Caco-2 (cell line): ENCODE measurements at regions of chr5 and their contacts with region 1.

Region 1: GRCh38 chr5:134436523-134437339 is 25.1 kb upstream of the CDKN2AIPNL start:
- DNase-seq: peak; percentile 84 to 86
- H3K4me3 ChIP-seq: peak overlapping the region; percentile 19
- H3K4me3 Mint-ChIP-seq: peak overlapping the region; percentile 55
- H3K27ac Mint-ChIP-seq: peak overlapping the region; percentile 82
- H3K4me1 ChIP-seq: peaks cover 47% of the 10 kb centered on the region
- H3K4me1 Mint-ChIP-seq: peaks cover 54% of the 10 kb centered on the region
- H3K27me3 ChIP-seq: no peaks in the 10 kb centered on the region
- H3K27me3 Mint-ChIP-seq: no peaks in the 10 kb centered on the region
- CTCF ChIP-seq: no peak

Region 2: GRCh38 chr5:134411546-134412266 is 25.0 kb before region 1 on chr5 and contains the start of gene CDKN2AIPNL:
- CTCF ChIA-PET with region 1: interaction called, 5 read pairs
- POLR2A ChIA-PET with region 1: interaction called, 4 read pairs
- intact Hi-C with region 1: loop called (anchors 1 kb)
- DNase-seq: peak; percentile 91 to 95
- H3K4me3 ChIP-seq: peak within 1 kb of the TSS; percentile 83
- H3K4me3 Mint-ChIP-seq: peak within 1 kb of the TSS; percentile 98
- H3K27ac Mint-ChIP-seq: peak within 1 kb of the TSS; percentile 35
- H3K4me1 ChIP-seq: peaks cover 47% of the 10 kb centered on the region
- H3K4me1 Mint-ChIP-seq: peaks cover 11% of the 10 kb centered on the region
- H3K27me3 ChIP-seq: no peaks in the 10 kb centered on the region
- H3K27me3 Mint-ChIP-seq: no peaks in the 10 kb centered on the region
- CTCF ChIP-seq: peak; percentile 74 to 89
- total RNA-seq, gene CDKN2AIPNL: 49.8 and 53.2 TPM in 2 replicates